IMR-90 (cell line): ENCODE measurements at regions of chr11 and their contacts with region 1.

Region 1: GRCh38 chr11:79762279-79762921 is 321.6 kb upstream of the TENM4 start:
- DNase-seq: peak; percentile 3
- ATAC-seq: no peak
- H3K4me3 ChIP-seq: no peak overlapping the region
- H3K27ac ChIP-seq: no peak overlapping the region
- H3K4me1 ChIP-seq: no peaks in the 10 kb centered on the region
- H3K27me3 ChIP-seq: no peaks in the 10 kb centered on the region
- CTCF ChIP-seq: 0 out of 2 replicates have a peak, but pooled peaks have one; percentile 9
- POLR2A ChIP-seq: no peak
- RAD21 ChIP-seq: peak; percentile 29; the same call in 1 of the 2 replicates

Region 2: DNA sequence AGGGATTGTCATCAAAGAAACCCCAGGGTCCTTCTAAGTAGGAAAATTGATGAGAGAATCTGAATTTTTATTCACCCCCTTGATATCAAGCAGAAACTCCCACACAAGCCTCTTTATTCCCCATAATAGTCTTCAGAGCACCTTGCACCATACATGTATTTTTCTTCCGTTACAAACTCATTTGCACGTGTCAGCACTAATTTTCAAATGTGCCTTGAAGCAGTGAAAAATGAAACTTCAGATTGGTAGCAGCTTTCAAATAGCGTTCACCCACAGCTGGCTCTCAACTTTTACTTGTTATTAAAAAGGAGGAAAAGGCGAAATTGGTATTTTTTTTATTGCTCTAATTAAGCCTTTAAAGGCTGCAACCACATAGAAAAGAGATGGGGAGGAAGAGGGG is 21.4 kb after region 1 on chr11:
- CTCF ChIA-PET with region 1: no interaction called
- POLR2A ChIA-PET with region 1: no interaction called
- dilution Hi-C with region 1: no loop called
- in situ Hi-C with region 1: no loop called
- intact Hi-C with region 1: no loop called
- DNase-seq: no peak
- ATAC-seq: no peak
- H3K4me3 ChIP-seq: no peak overlapping the region
- H3K27ac ChIP-seq: no peak overlapping the region
- H3K4me1 ChIP-seq: no peaks in the 10 kb centered on the region
- H3K27me3 ChIP-seq: no peaks in the 10 kb centered on the region
- CTCF ChIP-seq: no peak
- POLR2A ChIP-seq: no peak
- RAD21 ChIP-seq: no peak

Region 3: DNA sequence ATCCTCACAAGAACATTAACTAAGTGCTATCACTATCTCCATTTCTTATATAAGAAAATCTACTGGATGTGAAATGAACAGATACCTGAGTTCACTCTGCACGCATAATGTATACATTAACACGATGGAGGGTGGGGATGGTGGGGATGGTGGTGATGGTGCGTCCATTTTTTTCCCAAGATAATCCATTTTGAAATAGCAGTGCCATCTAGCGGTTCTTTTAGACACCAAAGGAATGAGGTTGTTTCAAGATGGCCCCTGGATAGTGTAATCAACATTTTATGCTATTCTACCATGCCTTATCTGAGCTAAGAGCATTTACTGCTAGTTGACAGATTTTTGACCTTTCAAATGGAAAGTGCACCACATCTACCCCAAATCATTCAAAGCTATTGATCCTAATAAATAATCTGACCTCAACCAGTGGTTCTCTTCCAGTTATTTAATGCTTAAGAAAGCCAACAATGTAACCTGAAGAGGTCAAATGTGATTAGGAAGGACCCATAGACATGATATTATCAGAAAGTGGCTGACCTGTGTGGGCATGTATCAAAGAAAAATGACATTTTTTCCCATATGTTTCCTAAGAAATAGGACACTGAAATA is 393.1 kb after region 1 on chr11:
- CTCF ChIA-PET with region 1: no interaction called
- POLR2A ChIA-PET with region 1: no interaction called
- dilution Hi-C with region 1: no loop called
- in situ Hi-C with region 1: no loop called
- intact Hi-C with region 1: loop called (anchors 1 kb)
- DNase-seq: peak; percentile 37
- ATAC-seq: peak; percentile 85
- H3K4me3 ChIP-seq: no peak overlapping the region
- H3K27ac ChIP-seq: no peak overlapping the region
- H3K4me1 ChIP-seq: no peaks in the 10 kb centered on the region
- H3K27me3 ChIP-seq: no peaks in the 10 kb centered on the region
- CTCF ChIP-seq: peak; percentile 80
- POLR2A ChIP-seq: no peak
- RAD21 ChIP-seq: peak; percentile 82